ENCODE measurements at regions of chr10 and their contacts with region 1.

Region 1: GRCh38 chr10:34628174-34628796 is 186.8 kb downstream of the PARD3 start:
- DNase-seq: peak; percentile 46
- ATAC-seq: peak; percentile 82
- H3K4me3 ChIP-seq: no peak overlapping the region
- H3K27ac ChIP-seq: no peak overlapping the region
- H3K4me1 ChIP-seq: no peaks in the 10 kb centered on the region
- H3K27me3 ChIP-seq: no peaks in the 10 kb centered on the region
- CTCF ChIP-seq: no peak
- POLR2A ChIP-seq: no peak
- RAD21 ChIP-seq: no peak

Region 2: GRCh38 chr10:34374356-34375045 is 253.8 kb before region 1 on chr10:
- CTCF ChIA-PET with region 1: no interaction called
- POLR2A ChIA-PET with region 1: no interaction called
- dilution Hi-C with region 1: no loop called
- in situ Hi-C with region 1: no loop called
- intact Hi-C with region 1: loop called (anchors 10 kb)
- DNase-seq: no peak
- ATAC-seq: no peak
- H3K4me3 ChIP-seq: no peak overlapping the region
- H3K27ac ChIP-seq: no peak overlapping the region
- H3K4me1 ChIP-seq: no peaks in the 10 kb centered on the region
- H3K27me3 ChIP-seq: no peaks in the 10 kb centered on the region
- CTCF ChIP-seq: no peak
- POLR2A ChIP-seq: no peak
- RAD21 ChIP-seq: no peak